GM12878 (cell line): ENCODE measurements at regions of chr7 and their contacts with region 1.

Region 1: GRCh38 chr7:106400923-106401322 is 116.1 kb upstream of the NAMPT start:
- DNase-seq: no peak
- ATAC-seq: no peak
- H3K4me3 ChIP-seq: no peak overlapping the region
- H3K27ac ChIP-seq: no peak overlapping the region
- H3K4me1 ChIP-seq: peaks cover 2% of the 10 kb centered on the region; the same call in 1 of the 2 replicates
- H3K27me3 ChIP-seq: no peaks in the 10 kb centered on the region
- CTCF ChIP-seq: no peak
- EP300 ChIP-seq: no peak
- POLR2A ChIP-seq: no peak
- RAD21 ChIP-seq: no peak

Region 2: GRCh38 chr7:106384371-106384770 is 16.6 kb before region 1 on chr7:
- CTCF ChIA-PET with region 1: no interaction called
- POLR2A ChIA-PET with region 1: no interaction called
- RAD21 ChIA-PET with region 1: no interaction called
- SMC1A ChIA-PET with region 1: interaction called, 19 read pairs
- in situ Hi-C with region 1: no loop called
- intact Hi-C with region 1: no loop called
- DNase-seq: no peak
- ATAC-seq: no peak; the same call in 2 of the 3 replicates
- H3K4me3 ChIP-seq: no peak overlapping the region
- H3K27ac ChIP-seq: no peak overlapping the region
- H3K4me1 ChIP-seq: no peaks in the 10 kb centered on the region
- H3K27me3 ChIP-seq: no peaks in the 10 kb centered on the region
- CTCF ChIP-seq: no peak
- EP300 ChIP-seq: no peak
- POLR2A ChIP-seq: no peak
- RAD21 ChIP-seq: no peak

Region 3: GRCh38 chr7:106417277-106417907 is 16.5 kb after region 1 on chr7:
- CTCF ChIA-PET with region 1: no interaction called
- POLR2A ChIA-PET with region 1: no interaction called
- RAD21 ChIA-PET with region 1: no interaction called
- SMC1A ChIA-PET with region 1: interaction called, 11 read pairs
- in situ Hi-C with region 1: no loop called
- intact Hi-C with region 1: no loop called
- DNase-seq: no peak
- ATAC-seq: no peak
- H3K4me3 ChIP-seq: no peak overlapping the region
- H3K27ac ChIP-seq: no peak overlapping the region
- H3K4me1 ChIP-seq: no peaks in the 10 kb centered on the region
- H3K27me3 ChIP-seq: no peaks in the 10 kb centered on the region
- CTCF ChIP-seq: no peak
- EP300 ChIP-seq: no peak
- POLR2A ChIP-seq: no peak
- RAD21 ChIP-seq: no peak